ENCODE measurements at regions of chr18 and their contacts with region 1.

Region 1: GRCh38 chr18:22185273-22185672 is 15.9 kb downstream of the GATA6 start:
- DNase-seq: peak; percentile 40
- ATAC-seq: peak; percentile 86
- H3K4me3 Mint-ChIP-seq: no peak overlapping the region
- H3K27ac Mint-ChIP-seq: no peak overlapping the region
- H3K4me1 Mint-ChIP-seq: no peaks in the 10 kb centered on the region
- H3K27me3 Mint-ChIP-seq: peaks cover 33% of the 10 kb centered on the region
- CTCF ChIP-seq: no peak

Region 2: DNA sequence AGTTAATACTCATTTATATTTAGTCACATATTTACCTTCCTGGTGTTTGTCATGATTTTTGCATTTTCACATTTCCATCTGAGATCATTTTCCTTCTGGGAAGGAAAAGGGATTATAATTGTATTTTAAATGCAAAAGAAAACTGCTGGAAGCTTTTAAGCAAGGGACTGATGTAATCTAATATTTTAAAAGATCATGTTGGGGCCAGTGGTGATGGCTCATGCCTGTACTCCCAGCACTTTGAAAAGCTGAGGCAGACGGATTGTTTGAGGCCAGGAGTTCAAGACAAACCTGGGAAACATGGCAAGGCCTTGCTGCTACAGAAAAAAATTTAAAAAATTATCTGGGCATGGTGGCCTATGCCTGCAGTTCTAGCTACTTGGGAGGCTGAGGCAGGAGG is 295.7 kb before region 1 on chr18:
- CTCF ChIA-PET with region 1: no interaction called
- POLR2A ChIA-PET with region 1: no interaction called
- DNase-seq: no peak
- ATAC-seq: no peak
- H3K4me3 Mint-ChIP-seq: no peak overlapping the region
- H3K27ac Mint-ChIP-seq: no peak overlapping the region
- H3K4me1 Mint-ChIP-seq: no peaks in the 10 kb centered on the region
- H3K27me3 Mint-ChIP-seq: peaks cover 15% of the 10 kb centered on the region
- CTCF ChIP-seq: no peak

Region 3: GRCh38 chr18:22197668-22198067 is 12.4 kb after region 1 on chr18:
- CTCF ChIA-PET with region 1: interaction called, 10 read pairs
- POLR2A ChIA-PET with region 1: no interaction called
- DNase-seq: no peak
- ATAC-seq: no peak
- H3K4me3 Mint-ChIP-seq: no peak overlapping the region
- H3K27ac Mint-ChIP-seq: peak overlapping the region; percentile 53; the same call in 1 of the 2 replicates
- H3K4me1 Mint-ChIP-seq: peaks cover 28% of the 10 kb centered on the region
- H3K27me3 Mint-ChIP-seq: peaks cover 5% of the 10 kb centered on the region
- CTCF ChIP-seq: no peak

Region 4: GRCh38 chr18:22233106-22233640 is 47.9 kb after region 1 on chr18:
- CTCF ChIA-PET with region 1: interaction called, 10 read pairs
- POLR2A ChIA-PET with region 1: no interaction called
- DNase-seq: no peak
- ATAC-seq: peak; percentile 67
- H3K4me3 Mint-ChIP-seq: no peak overlapping the region
- H3K27ac Mint-ChIP-seq: no peak overlapping the region
- H3K4me1 Mint-ChIP-seq: peaks cover 9% of the 10 kb centered on the region
- H3K27me3 Mint-ChIP-seq: no peaks in the 10 kb centered on the region; the same call in none of the 2 replicates
- CTCF ChIP-seq: no peak

Region 5: DNA sequence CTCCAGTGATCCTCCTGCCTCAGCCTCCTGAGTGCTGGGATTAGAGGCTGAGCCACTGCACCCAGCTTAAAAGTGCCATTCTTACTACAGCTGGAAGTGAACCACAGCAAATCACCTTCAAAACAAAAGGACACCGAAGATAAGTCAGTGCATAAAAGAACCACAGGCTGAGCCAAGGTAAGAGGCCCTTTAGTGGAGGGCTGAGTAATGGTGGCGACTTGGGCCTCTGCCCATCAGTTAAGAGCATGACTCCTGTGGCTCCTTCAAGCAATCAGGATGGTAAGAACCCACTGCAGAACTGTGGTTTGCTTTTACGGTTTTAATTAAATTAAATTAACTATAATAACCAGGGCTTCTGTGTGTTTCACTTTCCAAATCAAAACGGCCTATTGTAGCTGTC is 157.4 kb after region 1 on chr18:
- CTCF ChIA-PET with region 1: no interaction called
- POLR2A ChIA-PET with region 1: no interaction called
- DNase-seq: no peak
- ATAC-seq: no peak
- H3K4me3 Mint-ChIP-seq: no peak overlapping the region
- H3K27ac Mint-ChIP-seq: no peak overlapping the region
- H3K4me1 Mint-ChIP-seq: peaks cover 24% of the 10 kb centered on the region
- H3K27me3 Mint-ChIP-seq: peaks cover 44% of the 10 kb centered on the region
- CTCF ChIP-seq: no peak

Region 6: DNA sequence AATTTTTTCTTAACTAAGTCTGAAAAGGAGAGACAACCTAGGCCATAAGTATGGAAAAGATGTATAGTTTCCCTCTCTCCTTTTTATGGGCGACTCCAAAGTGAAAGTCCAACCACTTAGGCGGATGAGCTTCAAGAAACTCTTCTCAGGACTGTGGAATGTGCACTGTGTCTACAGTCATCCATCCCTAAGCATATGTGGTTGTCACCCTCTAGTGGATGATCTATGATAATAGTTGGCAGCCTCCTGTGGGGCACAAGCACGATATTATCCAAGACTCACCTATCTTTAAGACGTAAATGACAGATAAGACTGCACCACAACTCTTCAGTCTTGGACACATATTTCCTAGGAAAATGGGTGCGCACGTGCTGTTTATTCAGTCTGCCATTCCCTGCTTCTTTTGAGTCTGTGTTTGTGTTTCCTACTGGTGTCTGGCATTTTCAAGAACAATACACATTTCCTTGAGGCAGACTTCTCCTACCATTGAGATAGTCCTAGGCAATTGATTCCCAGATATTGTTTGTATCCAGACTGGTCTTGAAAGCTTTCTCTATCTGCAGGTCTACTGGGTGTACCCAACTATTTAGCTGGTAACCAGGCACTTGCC is 377.9 kb after region 1 on chr18:
- CTCF ChIA-PET with region 1: interaction called, 10 read pairs
- POLR2A ChIA-PET with region 1: no interaction called
- DNase-seq: no peak
- ATAC-seq: peak; percentile 78
- H3K4me3 Mint-ChIP-seq: no peak overlapping the region
- H3K27ac Mint-ChIP-seq: no peak overlapping the region
- H3K4me1 Mint-ChIP-seq: peaks cover 15% of the 10 kb centered on the region
- H3K27me3 Mint-ChIP-seq: peaks cover 53% of the 10 kb centered on the region
- CTCF ChIP-seq: peak; percentile 50

Measured in WTC11 (cell line).